ENCODE measurements at regions of chr6 and their contacts with region 1.

Region 1: GRCh38 chr6:138509371-138509770 is 10.1 kb upstream of the NHSL1 start:
- DNase-seq: peak; percentile 47 to 64
- H3K4me3 ChIP-seq: no peak overlapping the region
- H3K4me3 Mint-ChIP-seq: no peak overlapping the region
- H3K27ac Mint-ChIP-seq: no peak overlapping the region
- H3K4me1 ChIP-seq: peaks cover 50% of the 10 kb centered on the region
- H3K4me1 Mint-ChIP-seq: peaks cover 27% of the 10 kb centered on the region
- H3K27me3 ChIP-seq: no peaks in the 10 kb centered on the region
- H3K27me3 Mint-ChIP-seq: no peaks in the 10 kb centered on the region
- CTCF ChIP-seq: peak; percentile 41 to 61

Region 2: DNA sequence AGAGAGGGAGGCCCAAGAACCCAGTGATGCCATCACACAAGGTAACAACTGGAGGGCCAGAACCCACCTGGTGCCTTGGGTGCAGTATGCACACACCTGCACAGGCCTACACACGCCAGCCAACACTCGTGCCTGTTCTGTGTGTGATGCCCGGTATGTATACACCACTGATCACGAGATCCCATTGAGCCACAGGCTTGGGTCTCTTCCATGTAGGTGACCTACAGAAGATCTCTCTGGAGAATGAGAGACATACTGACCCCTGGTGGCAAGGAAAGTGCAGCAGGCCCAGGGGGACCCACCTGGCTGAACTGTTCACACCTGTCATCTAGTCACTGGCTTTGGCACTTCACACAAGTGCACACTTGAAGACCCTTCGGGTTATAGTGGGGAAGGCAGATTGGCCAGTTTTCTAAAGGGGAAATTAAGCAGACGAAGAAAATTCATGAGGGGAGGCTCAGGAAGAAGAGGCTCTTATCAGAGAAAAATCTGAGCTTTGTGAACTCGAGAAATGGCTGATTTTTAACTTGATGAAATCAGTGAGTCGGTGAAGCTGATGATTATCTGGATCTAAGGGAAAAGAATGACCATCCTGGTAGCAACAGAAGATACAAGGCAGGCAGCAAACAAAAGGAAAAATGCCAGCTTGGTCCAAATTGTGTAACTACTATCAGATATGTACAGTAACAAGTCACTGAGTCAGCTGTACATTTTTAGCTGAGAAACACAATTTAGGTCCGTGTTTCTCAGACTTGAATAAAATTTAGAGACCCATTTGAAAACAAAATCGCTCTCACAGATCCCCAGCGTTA is 222.0 kb before region 1 on chr6:
- CTCF ChIA-PET with region 1: no interaction called
- POLR2A ChIA-PET with region 1: no interaction called
- intact Hi-C with region 1: loop called (anchors 5 kb)
- DNase-seq: peak; percentile 69 to 77
- H3K4me3 ChIP-seq: no peak overlapping the region
- H3K4me3 Mint-ChIP-seq: no peak overlapping the region
- H3K27ac Mint-ChIP-seq: peak overlapping the region; percentile 13
- H3K4me1 ChIP-seq: no peaks in the 10 kb centered on the region
- H3K4me1 Mint-ChIP-seq: no peaks in the 10 kb centered on the region
- H3K27me3 ChIP-seq: no peaks in the 10 kb centered on the region
- H3K27me3 Mint-ChIP-seq: no peaks in the 10 kb centered on the region
- CTCF ChIP-seq: peak; percentile 69 to 81

Region 3: DNA sequence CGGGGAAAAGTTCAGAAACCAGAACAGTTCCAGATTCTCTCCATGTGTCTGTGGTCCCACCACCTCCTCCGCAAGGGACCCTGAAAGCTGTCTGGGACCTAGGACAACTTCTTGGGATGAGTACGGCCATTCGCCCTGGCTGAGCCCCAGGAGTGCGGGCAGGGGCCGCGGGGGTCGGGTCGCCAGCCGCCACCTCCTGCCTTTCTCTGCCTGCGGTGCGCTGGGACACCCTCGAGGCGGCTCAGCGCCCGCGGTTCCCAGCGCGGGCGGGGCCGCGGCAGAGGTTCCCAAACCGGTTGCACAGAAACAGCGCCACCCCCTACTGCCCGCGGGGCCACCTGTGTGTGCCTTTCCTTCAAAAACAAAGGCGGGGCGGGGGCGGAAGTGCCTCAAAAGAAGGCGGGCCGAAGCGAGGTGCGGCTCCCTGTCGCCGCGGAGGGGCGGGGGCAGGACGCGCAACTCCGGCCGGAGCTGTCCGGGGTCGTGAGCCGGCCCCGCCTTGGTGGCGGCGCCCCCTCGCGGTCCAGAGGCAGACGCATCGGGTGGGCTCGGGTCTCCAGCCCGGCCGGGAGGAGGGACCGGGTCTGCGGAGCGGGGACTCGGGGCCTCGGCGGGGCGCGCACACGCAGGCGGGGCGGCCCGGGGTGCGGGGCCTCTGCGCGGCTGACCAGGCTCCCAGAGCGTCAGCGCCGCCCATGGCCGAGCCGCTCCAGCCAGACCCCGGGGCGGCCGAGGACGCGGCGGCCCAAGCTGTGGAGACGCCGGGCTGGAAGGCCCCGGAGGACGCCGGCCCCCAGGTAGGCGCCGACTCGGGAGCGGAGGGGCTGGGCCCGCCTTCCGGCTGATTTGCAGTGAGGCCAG is 105.3 kb before region 1 on chr6 and contains the start of gene HEBP2:
- CTCF ChIA-PET with region 1: no interaction called
- POLR2A ChIA-PET with region 1: no interaction called
- intact Hi-C with region 1: no loop called
- DNase-seq: peak; percentile 99
- H3K4me3 ChIP-seq: peak within 1 kb of the TSS; percentile 81
- H3K4me3 Mint-ChIP-seq: peak within 1 kb of the TSS; percentile 81
- H3K27ac Mint-ChIP-seq: peak within 1 kb of the TSS; percentile 81
- H3K4me1 ChIP-seq: peaks cover 11% of the 10 kb centered on the region; the same call in 1 of the 2 replicates
- H3K4me1 Mint-ChIP-seq: no peaks in the 10 kb centered on the region
- H3K27me3 ChIP-seq: no peaks in the 10 kb centered on the region
- H3K27me3 Mint-ChIP-seq: no peaks in the 10 kb centered on the region
- CTCF ChIP-seq: peak; percentile 53 to 65
- total RNA-seq, gene HEBP2: 64.3 and 73.1 TPM in 2 replicates

Region 4: DNA sequence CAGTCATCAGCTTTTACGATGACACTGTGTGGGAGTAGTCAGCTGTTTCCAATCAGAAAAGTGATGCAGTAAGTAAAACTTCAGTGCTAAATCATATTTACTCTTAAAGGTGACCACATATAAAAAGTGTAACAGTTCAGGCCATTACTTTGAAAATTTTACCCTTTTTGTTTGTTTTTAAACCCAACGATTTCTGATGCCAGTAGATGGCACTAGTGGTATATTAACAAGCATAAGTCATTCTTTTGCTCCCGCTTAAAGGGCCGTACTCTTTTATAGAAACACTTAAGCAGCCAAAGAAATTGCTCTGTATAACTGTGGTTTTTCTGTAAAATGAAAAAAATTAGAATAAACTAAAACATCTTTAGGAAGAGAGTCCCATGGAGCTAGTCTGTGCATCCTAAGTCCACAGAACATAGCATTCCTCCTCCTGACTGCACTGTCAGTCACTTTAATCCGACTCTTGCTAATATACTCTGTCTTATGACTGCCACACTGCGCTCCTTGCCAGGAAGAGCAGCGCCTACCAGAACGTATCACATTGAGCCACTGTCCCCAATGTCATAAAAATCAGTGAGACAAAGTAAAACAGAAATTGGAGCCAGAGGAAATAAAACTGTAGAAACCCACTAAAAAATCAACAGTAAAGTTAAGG is 80.3 kb before region 1 on chr6:
- CTCF ChIA-PET with region 1: no interaction called
- POLR2A ChIA-PET with region 1: no interaction called
- intact Hi-C with region 1: loop called (anchors 1 kb)
- DNase-seq: peak in 1 of 2 experiments; percentile 45
- H3K4me3 ChIP-seq: no peak overlapping the region
- H3K4me3 Mint-ChIP-seq: no peak overlapping the region
- H3K27ac Mint-ChIP-seq: no peak overlapping the region
- H3K4me1 ChIP-seq: no peaks in the 10 kb centered on the region
- H3K4me1 Mint-ChIP-seq: peaks cover 5% of the 10 kb centered on the region
- H3K27me3 ChIP-seq: no peaks in the 10 kb centered on the region
- H3K27me3 Mint-ChIP-seq: no peaks in the 10 kb centered on the region
- CTCF ChIP-seq: peak; percentile 59 to 65

Measured in Caco-2 (cell line).